ENCODE measurements at regions of chr4 and their contacts with region 1.

Region 1: GRCh38 chr4:176664964-176665363 is 127.8 kb downstream of the VEGFC start:
- DNase-seq: no peak
- H3K4me3 ChIP-seq: no peak overlapping the region
- CTCF ChIP-seq: no peak
- POLR2A ChIP-seq: no peak

Region 2: DNA sequence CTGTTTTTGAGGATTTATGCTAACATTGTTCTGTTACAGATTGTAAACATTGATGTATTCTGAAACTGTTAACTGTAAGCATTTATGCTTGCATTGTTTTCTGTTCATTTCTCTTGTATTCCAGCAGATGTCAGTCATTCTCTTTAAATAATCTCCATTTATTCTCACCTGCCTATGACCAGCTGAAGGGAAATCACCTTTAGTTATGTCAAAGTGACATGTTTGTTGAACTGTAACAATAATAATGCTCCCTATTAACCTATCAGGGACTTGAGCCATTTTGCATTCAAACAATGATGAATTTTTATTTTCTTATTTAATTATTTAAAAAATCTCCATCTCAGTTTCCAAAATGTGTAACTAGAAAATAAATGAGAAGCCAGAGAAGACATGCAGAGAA is 287.2 kb before region 1 on chr4:
- intact Hi-C with region 1: no loop called
- DNase-seq: no peak
- H3K4me3 ChIP-seq: no peak overlapping the region
- CTCF ChIP-seq: no peak
- POLR2A ChIP-seq: no peak

Region 3: GRCh38 chr4:176729489-176729888 is 64.5 kb after region 1 on chr4:
- intact Hi-C with region 1: loop called (anchors 2 kb)
- DNase-seq: no peak
- H3K4me3 ChIP-seq: no peak overlapping the region
- CTCF ChIP-seq: no peak
- POLR2A ChIP-seq: no peak

Region 4: GRCh38 chr4:177005674-177006230 is 340.8 kb after region 1 on chr4:
- intact Hi-C with region 1: no loop called
- DNase-seq: no peak
- H3K4me3 ChIP-seq: no peak overlapping the region
- CTCF ChIP-seq: no peak
- POLR2A ChIP-seq: no peak

Measured in lower leg skin (tissue), 4 donors.